A673 (cell line): ENCODE measurements at regions of chr4 and their contacts with region 1.

Region 1: GRCh38 chr4:95124906-95125504 is 367.2 kb downstream of the BMPR1B start:
- DNase-seq: peak; percentile 65
- H3K4me3 ChIP-seq: no peak overlapping the region
- H3K27ac ChIP-seq: no peak overlapping the region
- H3K4me1 ChIP-seq: peaks cover 8% of the 10 kb centered on the region
- H3K27me3 ChIP-seq: no peaks in the 10 kb centered on the region
- CTCF ChIP-seq: peak; percentile 57

Region 2: DNA sequence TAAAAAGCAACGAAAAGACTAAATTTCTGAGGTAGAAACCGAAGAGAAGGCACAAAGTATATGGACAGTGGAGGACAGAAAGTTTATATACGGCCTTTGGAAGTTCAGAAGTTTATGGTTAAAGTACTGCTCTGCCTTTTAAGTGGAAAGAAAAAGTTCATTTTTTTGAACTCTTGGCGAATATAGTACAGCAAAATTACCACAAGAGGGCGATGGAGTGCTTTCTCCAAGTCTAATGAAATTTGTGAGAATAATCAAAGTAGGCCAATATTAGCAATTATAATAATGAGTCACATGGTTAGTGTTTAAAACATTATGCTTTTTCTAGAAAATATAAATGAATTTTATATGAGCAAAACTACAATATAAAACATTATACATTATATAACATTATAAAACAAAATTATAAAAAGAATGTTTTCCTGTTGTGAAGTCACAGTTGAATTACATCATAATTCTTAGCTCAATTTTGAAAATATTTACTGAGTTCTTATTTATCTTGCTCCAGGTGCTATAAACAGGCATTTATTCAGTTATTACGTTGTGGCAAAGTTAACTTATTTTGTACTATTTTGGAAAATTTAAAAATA is 503.4 kb before region 1 on chr4:
- CTCF ChIA-PET with region 1: no interaction called
- POLR2A ChIA-PET with region 1: no interaction called
- intact Hi-C with region 1: loop called (anchors 5 kb)
- DNase-seq: peak; percentile 34
- H3K4me3 ChIP-seq: no peak overlapping the region
- H3K27ac ChIP-seq: no peak overlapping the region
- H3K4me1 ChIP-seq: peaks cover 12% of the 10 kb centered on the region
- H3K27me3 ChIP-seq: no peaks in the 10 kb centered on the region
- CTCF ChIP-seq: peak; percentile 66

Region 3: GRCh38 chr4:94757192-94758139 is 367.5 kb before region 1 on chr4 and contains the start of gene BMPR1B:
- CTCF ChIA-PET with region 1: no interaction called
- POLR2A ChIA-PET with region 1: no interaction called
- intact Hi-C with region 1: loop called (anchors 10 kb)
- DNase-seq: peak; percentile 80
- H3K4me3 ChIP-seq: peak within 1 kb of the TSS; percentile 58
- H3K27ac ChIP-seq: peak within 1 kb of the TSS; percentile 47
- H3K4me1 ChIP-seq: no peaks in the 10 kb centered on the region
- H3K27me3 ChIP-seq: no peaks in the 10 kb centered on the region
- CTCF ChIP-seq: no peak
- total RNA-seq, gene BMPR1B: 2.2 and 3.7 TPM in 2 replicates

Region 4: DNA sequence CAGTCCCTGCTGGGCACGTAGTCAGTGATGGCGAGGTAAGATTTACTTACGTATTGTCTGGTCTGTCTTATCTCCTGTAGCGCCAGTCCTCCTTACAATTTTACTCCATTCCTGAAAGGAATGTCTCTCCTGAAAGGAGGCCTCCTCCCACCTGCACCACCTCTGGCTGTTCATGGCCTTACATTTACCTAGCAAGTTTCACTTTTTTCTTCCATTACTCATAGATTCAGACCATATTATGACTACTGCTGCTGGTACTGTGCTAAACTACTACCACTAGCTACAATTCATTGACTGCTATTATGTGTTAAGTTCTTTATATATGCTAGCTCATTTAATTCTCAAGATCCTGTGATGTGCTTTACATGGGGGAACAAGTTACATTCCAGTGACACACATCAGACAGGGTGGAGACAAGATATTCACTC is 177.3 kb before region 1 on chr4:
- CTCF ChIA-PET with region 1: no interaction called
- POLR2A ChIA-PET with region 1: no interaction called
- intact Hi-C with region 1: no loop called
- DNase-seq: no peak
- H3K4me3 ChIP-seq: no peak overlapping the region
- H3K27ac ChIP-seq: no peak overlapping the region
- H3K4me1 ChIP-seq: no peaks in the 10 kb centered on the region
- H3K27me3 ChIP-seq: no peaks in the 10 kb centered on the region
- CTCF ChIP-seq: no peak

Region 5: DNA sequence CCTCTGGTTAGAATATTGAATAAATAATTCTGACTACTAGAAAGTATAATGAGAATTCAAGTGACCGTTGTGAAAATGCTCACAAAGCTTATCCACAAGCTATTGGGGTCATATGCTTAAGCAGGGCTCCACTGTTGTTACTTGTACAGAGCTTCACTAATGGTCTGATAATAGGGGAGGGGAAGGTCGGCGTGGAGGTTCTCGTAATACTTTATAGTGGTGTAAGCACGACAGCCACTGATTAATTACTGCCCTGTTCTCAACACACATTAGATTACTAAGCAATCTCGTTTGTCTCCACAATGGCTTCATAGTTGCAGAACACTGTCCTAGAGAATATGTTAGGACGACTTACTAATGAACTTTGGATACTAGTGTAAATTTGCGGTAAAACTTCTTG is 412.2 kb after region 1 on chr4:
- CTCF ChIA-PET with region 1: no interaction called
- POLR2A ChIA-PET with region 1: no interaction called
- intact Hi-C with region 1: no loop called
- DNase-seq: no peak
- H3K4me3 ChIP-seq: no peak overlapping the region
- H3K27ac ChIP-seq: no peak overlapping the region
- H3K4me1 ChIP-seq: no peaks in the 10 kb centered on the region
- H3K27me3 ChIP-seq: no peaks in the 10 kb centered on the region
- CTCF ChIP-seq: no peak